MCF 10A (cell line): ENCODE measurements at regions of chr9 and their contacts with region 1.

Region 1: DNA sequence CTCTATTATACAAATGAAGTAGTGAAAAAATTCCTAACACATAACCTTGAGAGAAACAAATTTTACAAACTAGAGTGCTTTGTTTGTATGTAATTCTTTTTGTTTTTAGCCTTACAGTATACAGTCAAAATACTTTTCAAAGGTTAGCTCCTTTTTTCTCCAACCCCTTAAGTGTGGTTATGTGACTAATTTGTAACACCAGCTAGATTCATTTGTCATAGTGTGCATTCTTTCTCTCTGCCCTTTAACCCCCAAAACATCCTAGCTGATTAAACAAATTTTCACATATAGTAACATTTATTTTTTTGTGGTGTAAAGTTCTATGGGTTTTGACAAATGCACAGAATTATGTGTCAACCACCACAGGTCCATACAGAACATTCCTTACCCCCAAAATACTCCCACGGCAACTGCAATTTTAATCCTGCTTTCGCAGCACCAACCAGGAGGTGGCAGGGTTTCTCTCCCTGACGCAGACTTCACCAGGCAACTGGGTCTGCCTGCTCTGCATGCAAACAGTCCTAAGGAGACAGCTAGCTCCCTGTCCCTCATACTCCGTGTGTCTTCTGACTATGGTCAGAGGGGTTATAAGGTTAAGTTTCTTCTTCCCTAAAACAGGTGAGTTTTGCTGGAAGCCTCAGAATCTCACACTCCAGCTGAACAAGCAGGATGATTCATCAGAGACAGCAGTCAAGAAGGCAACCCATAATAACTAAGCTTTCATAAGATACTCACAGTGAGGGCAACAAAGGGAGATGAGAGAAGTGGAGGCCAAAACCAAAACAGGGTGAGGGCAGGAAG is 44.5 kb upstream of the NR5A1 start:
- DNase-seq: peak; percentile 59
- H3K4me3 Mint-ChIP-seq: no peak overlapping the region
- H3K27ac Mint-ChIP-seq: no peak overlapping the region
- H3K4me1 Mint-ChIP-seq: no peaks in the 10 kb centered on the region
- H3K27me3 Mint-ChIP-seq: no peaks in the 10 kb centered on the region
- CTCF ChIP-seq: peak; percentile 78

Region 2: DNA sequence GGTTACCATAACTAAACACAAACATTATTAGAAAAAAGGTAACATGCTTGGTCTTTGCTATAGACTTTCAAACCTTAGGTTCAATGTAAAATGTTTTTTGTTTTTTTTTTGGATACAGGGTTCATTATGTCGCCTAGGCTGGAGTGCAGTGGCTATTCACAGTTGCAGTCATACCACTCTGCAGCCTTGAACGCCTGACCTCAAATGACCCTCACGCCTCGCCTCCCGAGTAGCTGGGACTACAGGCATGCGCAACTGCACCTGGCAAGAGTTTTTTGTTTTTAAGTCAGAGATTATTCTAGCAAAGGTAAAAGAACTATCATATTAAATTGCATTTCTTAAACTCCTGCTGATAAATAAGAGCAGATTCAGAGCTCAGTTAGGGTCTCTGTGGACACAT is 10.7 kb after region 1 on chr9:
- CTCF ChIA-PET with region 1: interaction called, 40 read pairs
- POLR2A ChIA-PET with region 1: interaction called, 4 read pairs
- intact Hi-C with region 1: no loop called
- DNase-seq: no peak
- H3K4me3 Mint-ChIP-seq: no peak overlapping the region
- H3K27ac Mint-ChIP-seq: no peak overlapping the region
- H3K4me1 Mint-ChIP-seq: peaks cover 6% of the 10 kb centered on the region
- H3K27me3 Mint-ChIP-seq: no peaks in the 10 kb centered on the region
- CTCF ChIP-seq: no peak

Region 3: GRCh38 chr9:124574534-124575341 is 23.1 kb after region 1 on chr9:
- CTCF ChIA-PET with region 1: interaction called, 30 read pairs
- POLR2A ChIA-PET with region 1: no interaction called
- intact Hi-C with region 1: no loop called
- DNase-seq: peak; percentile 31
- H3K4me3 Mint-ChIP-seq: no peak overlapping the region
- H3K27ac Mint-ChIP-seq: no peak overlapping the region
- H3K4me1 Mint-ChIP-seq: peaks cover 5% of the 10 kb centered on the region
- H3K27me3 Mint-ChIP-seq: no peaks in the 10 kb centered on the region
- CTCF ChIP-seq: no peak

Region 4: DNA sequence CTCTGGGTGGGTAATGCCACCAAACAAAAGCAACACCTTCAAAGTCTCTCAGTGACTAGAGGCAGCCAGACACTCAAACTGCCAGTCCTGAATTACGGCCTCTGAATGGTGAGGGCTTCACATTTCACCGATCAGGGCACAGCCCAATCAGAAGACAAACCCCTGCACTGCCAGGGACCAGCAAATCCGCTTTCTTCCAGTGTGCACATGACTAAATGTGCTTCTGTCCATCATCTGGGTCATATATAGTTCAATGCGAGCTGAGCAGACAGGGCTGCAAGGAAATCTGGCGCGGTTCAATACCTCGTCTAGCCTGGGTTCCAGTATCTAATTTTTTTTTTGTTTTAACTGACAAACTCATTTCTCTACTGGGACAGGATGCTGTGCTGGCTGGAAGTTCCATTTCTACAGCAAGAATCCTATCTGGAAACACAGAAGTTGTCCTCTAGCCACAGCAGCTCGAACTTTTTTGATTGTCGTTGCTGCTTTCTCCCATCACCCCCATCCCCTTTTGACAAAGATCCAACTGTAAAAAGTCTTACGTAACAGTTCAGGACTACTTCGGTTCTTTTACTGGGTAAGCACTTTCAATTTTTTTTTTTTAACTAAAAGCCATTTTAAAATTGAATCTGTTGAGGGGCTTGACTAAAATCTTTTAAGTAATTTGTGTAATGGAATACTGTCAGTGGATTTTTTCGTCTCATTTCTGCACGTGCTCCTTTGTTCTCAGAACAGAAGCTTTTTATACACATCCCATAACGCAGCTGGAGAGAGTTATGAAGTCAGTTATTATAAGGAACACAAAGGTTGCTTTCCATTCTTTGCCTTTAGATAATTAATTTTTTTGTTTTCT is 106.7 kb after region 1 on chr9:
- CTCF ChIA-PET with region 1: interaction called, 10 read pairs
- POLR2A ChIA-PET with region 1: interaction called, 3 read pairs
- intact Hi-C with region 1: no loop called
- DNase-seq: peak; percentile 98
- H3K4me3 Mint-ChIP-seq: peak overlapping the region; percentile 98
- H3K27ac Mint-ChIP-seq: peak overlapping the region; percentile 96
- H3K4me1 Mint-ChIP-seq: peaks cover 20% of the 10 kb centered on the region
- H3K27me3 Mint-ChIP-seq: no peaks in the 10 kb centered on the region
- CTCF ChIP-seq: no peak

Region 5: GRCh38 chr9:124754289-124754688 is 202.6 kb after region 1 on chr9:
- CTCF ChIA-PET with region 1: interaction called, 6 read pairs
- POLR2A ChIA-PET with region 1: no interaction called
- intact Hi-C with region 1: loop called (anchors 5 kb)
- DNase-seq: peak; percentile 47
- H3K4me3 Mint-ChIP-seq: no peak overlapping the region
- H3K27ac Mint-ChIP-seq: no peak overlapping the region
- H3K4me1 Mint-ChIP-seq: peaks cover 32% of the 10 kb centered on the region
- H3K27me3 Mint-ChIP-seq: no peaks in the 10 kb centered on the region
- CTCF ChIP-seq: peak; percentile 45

Region 6: GRCh38 chr9:124840300-124840833 is 288.7 kb after region 1 on chr9:
- CTCF ChIA-PET with region 1: no interaction called
- POLR2A ChIA-PET with region 1: no interaction called
- intact Hi-C with region 1: no loop called
- DNase-seq: no peak
- H3K4me3 Mint-ChIP-seq: no peak overlapping the region
- H3K27ac Mint-ChIP-seq: no peak overlapping the region
- H3K4me1 Mint-ChIP-seq: peaks cover 5% of the 10 kb centered on the region
- H3K27me3 Mint-ChIP-seq: no peaks in the 10 kb centered on the region
- CTCF ChIP-seq: peak; percentile 28